ENCODE measurements at regions of chr11 and their contacts with region 1.

Region 1: GRCh38 chr11:6315811-6316425 is 4.4 kb downstream of the CAVIN3 start:
- DNase-seq: peak; percentile 45 to 54
- H3K4me3 ChIP-seq: no peak overlapping the region
- H3K27ac ChIP-seq: no peak overlapping the region
- H3K4me1 ChIP-seq: peaks cover 3 to 11% of the 10 kb centered on the region in 2 donors
- H3K27me3 ChIP-seq: no peaks in the 10 kb centered on the region
- CTCF ChIP-seq: peak; percentile 46 to 89 (median 70)
- POLR2A ChIP-seq: no peak

Region 2: GRCh38 chr11:6156628-6157359 is 159.1 kb before region 1 on chr11:
- intact Hi-C with region 1: no loop called
- DNase-seq: no peak
- H3K4me3 ChIP-seq: no peak overlapping the region
- H3K27ac ChIP-seq: no peak overlapping the region
- H3K4me1 ChIP-seq: no peaks in the 10 kb centered on the region
- H3K27me3 ChIP-seq: no peaks in the 10 kb centered on the region
- CTCF ChIP-seq: no peak
- POLR2A ChIP-seq: no peak

Region 3: DNA sequence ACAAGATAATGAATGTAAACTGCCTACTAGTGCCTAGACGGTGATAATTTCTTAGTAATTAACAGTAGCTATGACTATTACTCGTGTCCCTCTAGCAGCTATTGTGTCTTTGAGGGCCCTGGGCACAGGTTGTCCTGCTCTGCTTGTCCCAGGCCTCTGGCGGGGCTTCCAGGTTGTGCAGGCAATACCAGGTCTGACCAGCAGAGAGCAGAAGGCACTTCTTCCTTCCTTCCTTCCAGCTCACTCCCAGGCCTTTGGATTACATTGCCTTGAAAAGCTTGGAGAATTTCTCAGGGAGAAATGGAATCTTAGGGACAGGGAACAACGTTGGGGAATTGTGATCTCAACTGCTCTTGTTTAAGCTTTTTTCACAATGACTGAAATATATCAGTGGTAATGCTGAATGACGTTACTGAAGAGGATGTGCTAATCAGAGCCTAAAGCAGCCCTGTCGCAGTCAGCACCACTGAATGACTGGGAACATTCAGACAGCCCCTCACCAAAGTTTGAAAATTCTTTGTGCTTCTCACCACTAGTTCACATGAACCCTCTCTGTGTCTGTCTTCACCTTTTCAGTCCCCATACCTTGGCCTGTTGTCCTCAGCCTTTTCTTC is 64.7 kb before region 1 on chr11:
- intact Hi-C with region 1: loop called (anchors 10 kb)
- DNase-seq: peak; percentile 75 to 78
- H3K4me3 ChIP-seq: no peak overlapping the region
- H3K27ac ChIP-seq: no peak overlapping the region
- H3K4me1 ChIP-seq: no peaks in the 10 kb centered on the region
- H3K27me3 ChIP-seq: no peaks in the 10 kb centered on the region
- CTCF ChIP-seq: peak; percentile 61 to 99 (median 92)
- POLR2A ChIP-seq: no peak

Region 4: GRCh38 chr11:6362873-6363678 is 47.2 kb after region 1 on chr11:
- intact Hi-C with region 1: loop called (anchors 5 kb)
- DNase-seq: peak; percentile 75 to 78
- H3K4me3 ChIP-seq: no peak overlapping the region
- H3K27ac ChIP-seq: no peak overlapping the region
- H3K4me1 ChIP-seq: peaks cover 0 to 3% of the 10 kb centered on the region in 2 donors
- H3K27me3 ChIP-seq: no peaks in the 10 kb centered on the region
- CTCF ChIP-seq: peak; percentile 40 to 93 (median 63)
- POLR2A ChIP-seq: no peak

Region 5: DNA sequence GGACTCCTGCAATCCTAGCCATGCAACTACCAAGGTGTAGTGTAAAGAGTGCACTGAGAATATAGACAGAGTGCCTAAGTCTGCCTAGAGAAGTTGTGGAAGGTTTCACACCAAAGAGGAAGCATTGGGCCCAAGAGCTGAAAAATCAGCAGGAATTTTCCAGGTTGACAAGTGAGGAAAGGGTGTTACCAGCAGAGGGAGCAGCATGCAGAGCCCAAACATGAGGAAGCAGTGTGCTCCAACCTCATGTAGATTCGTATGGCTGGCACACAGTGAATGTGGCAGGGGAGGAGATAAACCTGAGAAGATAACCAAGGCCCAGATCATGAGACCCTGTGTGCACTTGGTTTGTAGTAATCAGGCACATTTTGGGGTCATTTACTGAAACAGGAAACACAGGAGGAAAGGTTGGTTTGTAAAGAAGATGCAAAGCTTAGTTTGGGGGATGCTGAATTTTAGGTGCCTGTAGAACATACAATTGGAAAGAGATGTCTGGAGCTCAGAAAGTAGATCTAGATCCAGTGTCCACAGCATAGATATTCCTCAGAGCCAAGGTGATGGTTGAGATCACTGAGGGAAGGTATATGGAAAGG is 123.2 kb after region 1 on chr11:
- intact Hi-C with region 1: no loop called
- DNase-seq: peak; percentile 32 to 36
- H3K4me3 ChIP-seq: no peak overlapping the region
- H3K27ac ChIP-seq: no peak overlapping the region
- H3K4me1 ChIP-seq: no peaks in the 10 kb centered on the region
- H3K27me3 ChIP-seq: no peaks in the 10 kb centered on the region
- CTCF ChIP-seq: peak in 4 of 6 experiments; percentile 29 to 52 (median 41)
- POLR2A ChIP-seq: no peak